CD8-positive, alpha-beta T cell (primary cell): ENCODE measurements at regions of chr7 and their contacts with region 1.

Region 1: DNA sequence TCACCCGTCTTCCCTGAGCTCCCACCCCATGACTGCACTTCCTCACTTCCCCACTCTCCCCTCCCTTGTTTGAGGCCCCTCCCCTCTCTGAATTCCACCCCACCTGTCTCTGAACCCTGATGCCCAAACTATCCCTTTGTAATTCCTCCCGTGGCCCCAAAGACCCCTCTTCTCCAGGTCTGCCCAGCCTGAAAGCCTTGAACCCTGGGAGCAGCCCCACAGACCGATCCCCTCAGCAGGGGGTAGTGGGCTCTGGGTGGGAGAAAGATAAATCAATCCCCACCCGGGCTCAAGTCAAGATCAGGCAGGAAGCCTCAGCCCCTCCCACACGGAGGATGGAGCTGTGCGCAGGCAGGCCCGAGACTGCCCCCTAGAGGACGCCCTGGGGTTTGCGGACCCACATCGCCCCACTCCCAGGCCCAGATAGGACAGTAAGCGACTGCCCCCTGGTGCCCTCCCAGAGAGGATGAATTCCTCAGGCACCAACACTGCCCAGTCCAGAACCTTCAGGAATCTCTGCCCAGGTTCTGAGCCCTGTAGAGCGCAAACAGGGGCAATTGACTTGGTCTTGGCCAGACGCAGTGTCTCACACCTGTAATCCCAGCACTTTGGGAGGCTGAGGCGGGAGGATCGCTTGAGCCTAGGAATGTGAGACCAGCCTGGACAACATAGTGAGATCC is 11.7 kb downstream of the HSPB1 start:
- DNase-seq: peak; percentile 93 to 98 (median 96)
- ATAC-seq: peak; percentile 69
- H3K4me3 ChIP-seq: no peak overlapping the region
- H3K4me3 Mint-ChIP-seq: peak overlapping the region; percentile 5
- H3K27ac ChIP-seq: no peak overlapping the region
- H3K27ac Mint-ChIP-seq: no peak overlapping the region
- H3K4me1 ChIP-seq: peaks cover 20% of the 10 kb centered on the region
- H3K4me1 Mint-ChIP-seq: peaks cover 20% of the 10 kb centered on the region
- H3K27me3 ChIP-seq: no peaks in the 10 kb centered on the region
- H3K27me3 Mint-ChIP-seq: no peaks in the 10 kb centered on the region
- CTCF ChIP-seq: peak; percentile 99

Region 2: DNA sequence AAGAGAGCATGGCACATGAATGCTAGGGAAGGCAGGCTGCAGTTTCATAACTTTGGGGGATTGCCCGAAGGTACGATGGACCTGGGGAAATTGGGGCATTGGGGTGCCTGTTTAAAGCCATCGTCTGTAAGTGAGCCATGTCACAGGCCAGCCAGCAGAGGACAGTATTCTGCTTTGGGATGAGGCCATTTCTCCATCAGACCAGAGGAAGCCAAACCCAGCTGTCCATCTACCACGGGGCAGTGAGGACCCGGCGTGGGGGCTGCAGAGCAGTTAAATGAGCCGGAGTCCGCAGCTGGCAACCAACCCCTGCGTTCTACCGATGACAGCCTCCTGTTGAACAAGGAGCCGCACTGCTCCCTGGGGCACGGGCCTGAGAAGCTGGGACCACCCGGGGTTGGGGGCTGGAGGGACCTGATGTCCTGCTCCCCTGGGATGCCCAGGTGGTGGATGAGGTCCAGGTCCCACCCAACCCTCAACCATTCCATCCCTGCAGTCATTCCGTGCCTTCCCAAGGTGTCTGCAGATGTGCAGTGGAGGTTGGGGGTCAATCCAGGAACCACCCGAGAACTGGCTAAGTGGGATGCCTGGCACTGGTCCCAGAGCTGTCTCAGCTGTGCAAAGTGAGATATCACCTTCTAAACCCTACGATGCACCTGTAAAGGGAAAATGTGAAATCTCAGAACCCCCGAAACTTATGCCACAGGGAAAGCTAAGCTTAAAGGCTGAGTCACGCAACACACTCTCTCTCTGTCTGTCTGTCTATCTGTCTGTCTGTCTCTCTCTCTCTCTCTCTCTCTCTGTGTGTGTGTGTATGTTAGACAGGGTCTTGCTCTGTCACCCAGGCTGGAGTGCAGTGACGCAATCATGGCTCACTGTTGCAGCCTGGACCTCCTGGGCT is 447.4 kb before region 1 on chr7:
- CTCF ChIA-PET with region 1: no interaction called
- POLR2A ChIA-PET with region 1: no interaction called
- intact Hi-C with region 1: loop called in 1 of 2 experiments (anchors 5 kb)
- DNase-seq: peak in 8 of 9 experiments; percentile 20 to 73 (median 44)
- ATAC-seq: peak; percentile 85
- H3K4me3 ChIP-seq: no peak overlapping the region
- H3K4me3 Mint-ChIP-seq: no peak overlapping the region
- H3K27ac ChIP-seq: no peak overlapping the region
- H3K27ac Mint-ChIP-seq: no peak overlapping the region
- H3K4me1 ChIP-seq: no peaks in the 10 kb centered on the region
- H3K4me1 Mint-ChIP-seq: peaks cover 8% of the 10 kb centered on the region
- H3K27me3 ChIP-seq: peaks cover 0 to 3% of the 10 kb centered on the region in 2 experiments
- H3K27me3 Mint-ChIP-seq: peaks cover 16% of the 10 kb centered on the region
- CTCF ChIP-seq: peak; percentile 62

Region 3: DNA sequence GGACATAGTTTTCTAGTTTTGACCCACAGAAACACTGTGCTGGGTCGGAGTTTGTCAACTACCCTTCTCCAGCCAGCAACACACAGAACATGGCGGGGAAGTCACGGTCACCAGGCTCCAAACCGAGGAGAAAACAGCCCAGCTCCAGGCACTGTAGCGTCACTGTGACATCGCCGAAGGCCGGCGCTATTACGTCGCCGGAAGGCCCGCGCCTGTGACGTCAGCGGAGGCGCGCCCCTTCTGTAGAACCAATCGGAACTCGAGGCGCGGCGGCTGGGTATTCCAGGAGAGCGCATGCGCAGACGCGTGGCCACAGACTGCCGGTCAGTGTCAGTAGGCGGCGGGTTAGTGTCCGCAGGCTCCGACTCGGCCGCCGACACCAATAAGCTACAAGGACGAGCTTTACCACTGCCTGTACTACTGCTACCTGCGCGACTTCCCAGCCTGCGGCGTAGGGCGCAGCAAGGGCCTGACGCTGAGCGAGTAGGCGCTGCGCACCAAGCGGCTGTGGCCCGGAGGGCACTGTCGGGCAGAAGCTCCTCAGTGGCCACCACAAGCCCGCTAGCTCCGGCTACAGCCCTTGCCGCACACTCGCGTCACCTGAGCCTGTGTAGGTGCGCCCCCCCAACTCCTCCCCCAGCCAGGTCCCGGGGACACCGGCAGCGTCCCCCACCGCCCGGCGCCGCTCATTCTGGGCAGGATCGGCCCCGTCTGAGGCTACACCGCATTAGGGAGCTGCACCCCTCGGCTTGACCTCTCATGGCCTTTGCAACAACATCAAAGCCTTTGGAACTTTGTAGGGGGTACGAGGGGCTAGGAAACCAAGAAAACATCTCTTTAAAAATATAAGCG is 147.6 kb before region 1 on chr7:
- CTCF ChIA-PET with region 1: interaction called, 4 read pairs
- POLR2A ChIA-PET with region 1: no interaction called
- intact Hi-C with region 1: loop called in 1 of 2 experiments (anchors 1 kb)
- DNase-seq: peak; percentile 84 to 96 (median 90)
- ATAC-seq: peak; percentile 90
- H3K4me3 ChIP-seq: peak overlapping the region; percentile 78 to 87
- H3K4me3 Mint-ChIP-seq: peak overlapping the region; percentile 92
- H3K27ac ChIP-seq: peak overlapping the region; percentile 92 to 93
- H3K27ac Mint-ChIP-seq: peak overlapping the region; percentile 98
- H3K4me1 ChIP-seq: peaks cover 5% of the 10 kb centered on the region
- H3K4me1 Mint-ChIP-seq: peaks cover 7% of the 10 kb centered on the region
- H3K27me3 ChIP-seq: no peaks in the 10 kb centered on the region
- H3K27me3 Mint-ChIP-seq: no peaks in the 10 kb centered on the region
- CTCF ChIP-seq: no peak

Region 4: GRCh38 chr7:76206633-76207032 is 107.5 kb before region 1 on chr7:
- CTCF ChIA-PET with region 1: no interaction called
- POLR2A ChIA-PET with region 1: no interaction called
- intact Hi-C with region 1: no loop called
- DNase-seq: no peak
- ATAC-seq: no peak
- H3K4me3 ChIP-seq: no peak overlapping the region
- H3K4me3 Mint-ChIP-seq: no peak overlapping the region
- H3K27ac ChIP-seq: no peak overlapping the region
- H3K27ac Mint-ChIP-seq: no peak overlapping the region
- H3K4me1 ChIP-seq: no peaks in the 10 kb centered on the region
- H3K4me1 Mint-ChIP-seq: no peaks in the 10 kb centered on the region
- H3K27me3 ChIP-seq: peaks cover 7 to 10% of the 10 kb centered on the region in 2 experiments
- H3K27me3 Mint-ChIP-seq: peaks cover 28% of the 10 kb centered on the region
- CTCF ChIP-seq: no peak

Region 5: GRCh38 chr7:76282344-76283253 is 31.6 kb before region 1 on chr7:
- CTCF ChIA-PET with region 1: interaction called, 31 read pairs
- POLR2A ChIA-PET with region 1: no interaction called
- intact Hi-C with region 1: no loop called
- DNase-seq: peak in 2 of 9 experiments; percentile 18 to 26
- ATAC-seq: peak; percentile 62
- H3K4me3 ChIP-seq: peak overlapping the region in 1 of 2 experiments; percentile 30
- H3K4me3 Mint-ChIP-seq: peak overlapping the region; percentile 70
- H3K27ac ChIP-seq: no peak overlapping the region
- H3K27ac Mint-ChIP-seq: no peak overlapping the region
- H3K4me1 ChIP-seq: peaks cover 13% of the 10 kb centered on the region
- H3K4me1 Mint-ChIP-seq: peaks cover 14% of the 10 kb centered on the region
- H3K27me3 ChIP-seq: peaks cover 6 to 24% of the 10 kb centered on the region in 2 experiments
- H3K27me3 Mint-ChIP-seq: peaks cover 35% of the 10 kb centered on the region
- CTCF ChIP-seq: no peak

Region 6: GRCh38 chr7:76302347-76303201 is 11.6 kb before region 1 on chr7 and contains the start of gene HSPB1:
- CTCF ChIA-PET with region 1: interaction called, 234 read pairs
- POLR2A ChIA-PET with region 1: interaction called, 5 read pairs
- intact Hi-C with region 1: loop called in 1 of 2 experiments (anchors 1 kb)
- DNase-seq: peak in 8 of 9 experiments; percentile 43 to 79 (median 68)
- ATAC-seq: peak; percentile 63
- H3K4me3 ChIP-seq: peak within 1 kb of the TSS; percentile 73 to 92
- H3K4me3 Mint-ChIP-seq: peak within 1 kb of the TSS; percentile 90
- H3K27ac ChIP-seq: peak within 1 kb of the TSS; percentile 37 to 46
- H3K27ac Mint-ChIP-seq: peak within 1 kb of the TSS; percentile 67
- H3K4me1 ChIP-seq: peaks cover 11% of the 10 kb centered on the region
- H3K4me1 Mint-ChIP-seq: peaks cover 19% of the 10 kb centered on the region
- H3K27me3 ChIP-seq: no peaks in the 10 kb centered on the region
- H3K27me3 Mint-ChIP-seq: no peaks in the 10 kb centered on the region
- CTCF ChIP-seq: no peak
- total RNA-seq, gene HSPB1: 26.1 to 33.2 TPM

Region 7: GRCh38 chr7:76359111-76359978 is 45.2 kb after region 1 on chr7:
- CTCF ChIA-PET with region 1: interaction called, 19 read pairs
- POLR2A ChIA-PET with region 1: interaction called, 24 read pairs
- intact Hi-C with region 1: loop called (anchors 1 kb)
- DNase-seq: peak; percentile 86 to 98 (median 95)
- ATAC-seq: peak; percentile 90
- H3K4me3 ChIP-seq: peak overlapping the region; percentile 94 to 99
- H3K4me3 Mint-ChIP-seq: peak overlapping the region; percentile 96
- H3K27ac ChIP-seq: peak overlapping the region; percentile 96
- H3K27ac Mint-ChIP-seq: peak overlapping the region; percentile 94
- H3K4me1 ChIP-seq: peaks cover 28% of the 10 kb centered on the region
- H3K4me1 Mint-ChIP-seq: peaks cover 39% of the 10 kb centered on the region
- H3K27me3 ChIP-seq: no peaks in the 10 kb centered on the region
- H3K27me3 Mint-ChIP-seq: no peaks in the 10 kb centered on the region
- CTCF ChIP-seq: peak; percentile 54